Naive thymus-derived CD4-positive, alpha-beta T cell (primary cell): ENCODE measurements at regions of chr9 and their contacts with region 1.

Region 1: GRCh38 chr9:128127990-128128835 is 684 bp upstream of the PTGES2 start:
- DNase-seq: peak; percentile 81 to 96 (median 93)
- ATAC-seq: peak; percentile 89
- H3K4me3 ChIP-seq: peak overlapping the region; percentile 99
- H3K4me3 Mint-ChIP-seq: peak overlapping the region; percentile 93 to 99 (median 98)
- H3K27ac ChIP-seq: peak overlapping the region; percentile 98
- H3K27ac Mint-ChIP-seq: peak overlapping the region; percentile 97 to 100 (median 99)
- H3K4me1 ChIP-seq: peaks cover 16 to 20% of the 10 kb centered on the region in 2 donors
- H3K4me1 Mint-ChIP-seq: peaks cover 22 to 44% (median 35%) of the 10 kb centered on the region in 7 donors
- H3K27me3 ChIP-seq: no peaks in the 10 kb centered on the region
- H3K27me3 Mint-ChIP-seq: peaks cover 0 to 24% (median 3%) of the 10 kb centered on the region in 5 donors

Region 2: GRCh38 chr9:126985870-126986498 is 1142.2 kb before region 1 on chr9:
- CTCF ChIA-PET with region 1: no interaction called
- POLR2A ChIA-PET with region 1: no interaction called
- intact Hi-C with region 1: loop called in 1 of 2 experiments (anchors 5 kb)
- DNase-seq: peak; percentile 57 to 97 (median 95)
- ATAC-seq: peak; percentile 92
- H3K4me3 ChIP-seq: peak overlapping the region; percentile 5
- H3K4me3 Mint-ChIP-seq: peak overlapping the region; percentile 58 to 88 (median 76)
- H3K27ac ChIP-seq: no peak overlapping the region
- H3K27ac Mint-ChIP-seq: peak overlapping the region; percentile 44 to 91 (median 81)
- H3K4me1 ChIP-seq: peaks cover 43 to 72% of the 10 kb centered on the region in 2 donors
- H3K4me1 Mint-ChIP-seq: peaks cover 53 to 69% (median 63%) of the 10 kb centered on the region in 7 donors
- H3K27me3 ChIP-seq: peaks cover 0 to 4% of the 10 kb centered on the region in 2 donors
- H3K27me3 Mint-ChIP-seq: peaks cover 56 to 86% (median 70%) of the 10 kb centered on the region in 5 donors

Region 3: GRCh38 chr9:127614961-127615360 is 513.3 kb before region 1 on chr9:
- CTCF ChIA-PET with region 1: no interaction called
- POLR2A ChIA-PET with region 1: no interaction called
- intact Hi-C with region 1: no loop called
- DNase-seq: no peak
- ATAC-seq: no peak
- H3K4me3 ChIP-seq: no peak overlapping the region
- H3K4me3 Mint-ChIP-seq: no peak overlapping the region
- H3K27ac ChIP-seq: no peak overlapping the region
- H3K27ac Mint-ChIP-seq: no peak overlapping the region
- H3K4me1 ChIP-seq: peaks cover 6 to 9% of the 10 kb centered on the region in 2 donors
- H3K4me1 Mint-ChIP-seq: peaks cover 16 to 19% (median 17%) of the 10 kb centered on the region in 7 donors
- H3K27me3 ChIP-seq: no peaks in the 10 kb centered on the region
- H3K27me3 Mint-ChIP-seq: peaks cover 0 to 30% (median 11%) of the 10 kb centered on the region in 5 donors

Region 4: DNA sequence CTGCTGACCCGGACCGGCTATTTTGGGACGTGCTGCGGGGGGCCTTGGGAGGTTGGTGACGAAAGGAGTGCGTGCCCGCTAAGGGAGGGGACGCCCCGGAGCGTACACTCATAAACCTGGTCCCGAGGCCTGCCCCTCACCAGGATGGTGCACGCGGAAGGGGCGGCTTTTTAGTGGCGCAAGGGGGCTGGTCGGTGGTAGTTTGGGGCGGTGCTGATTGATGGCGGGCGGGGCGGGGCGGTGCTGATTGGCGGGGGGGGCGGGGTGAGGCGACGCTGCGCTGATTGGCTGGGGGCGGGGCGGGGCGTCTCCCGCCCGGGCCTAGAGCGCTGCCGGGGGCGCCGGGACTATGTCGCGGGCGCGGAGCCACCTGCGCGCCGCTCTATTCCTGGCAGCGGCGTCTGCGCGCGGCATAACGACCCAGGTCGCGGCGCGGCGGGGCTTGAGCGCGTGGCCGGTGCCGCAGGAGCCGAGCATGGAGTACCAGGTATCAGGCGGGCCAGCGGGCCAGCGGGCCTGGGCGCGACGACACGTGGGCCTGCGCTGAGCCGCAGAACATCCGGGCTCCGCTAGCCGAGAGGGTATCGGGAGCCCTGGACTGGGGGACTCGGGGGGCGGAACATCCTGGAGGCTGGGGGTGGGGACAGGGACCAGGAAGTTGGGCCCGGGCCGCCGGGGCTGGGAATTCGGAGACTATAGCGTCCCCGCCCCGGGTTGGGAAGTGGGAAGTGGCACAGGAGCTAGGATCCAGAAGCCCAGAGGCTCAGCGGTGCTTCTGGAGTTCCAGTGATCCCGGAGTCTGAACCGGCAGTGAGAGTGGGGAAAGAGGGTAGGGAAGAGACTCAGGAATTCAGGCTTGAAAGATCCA is 325.4 kb before region 1 on chr9 and contains the start of gene FPGS:
- CTCF ChIA-PET with region 1: no interaction called
- POLR2A ChIA-PET with region 1: no interaction called
- intact Hi-C with region 1: loop called in 1 of 2 experiments (anchors 1 kb)
- DNase-seq: peak; percentile 77 to 86 (median 85)
- ATAC-seq: peak; percentile 94
- H3K4me3 ChIP-seq: peak within 1 kb of the TSS; percentile 81
- H3K4me3 Mint-ChIP-seq: peak within 1 kb of the TSS; percentile 81 to 95 (median 90)
- H3K27ac ChIP-seq: peak within 1 kb of the TSS; percentile 93
- H3K27ac Mint-ChIP-seq: peak within 1 kb of the TSS; percentile 80 to 95 (median 89)
- H3K4me1 ChIP-seq: peaks cover 12 to 19% of the 10 kb centered on the region in 2 donors
- H3K4me1 Mint-ChIP-seq: peaks cover 4 to 31% (median 20%) of the 10 kb centered on the region in 7 donors
- H3K27me3 ChIP-seq: no peaks in the 10 kb centered on the region
- H3K27me3 Mint-ChIP-seq: no peaks in the 10 kb centered on the region
- total RNA-seq, gene FPGS: 90.4 to 123 (median 95.4) TPM

Region 5: GRCh38 chr9:128055344-128056040 is 72.7 kb before region 1 on chr9:
- CTCF ChIA-PET with region 1: no interaction called
- POLR2A ChIA-PET with region 1: no interaction called
- intact Hi-C with region 1: no loop called
- DNase-seq: no peak
- ATAC-seq: no peak
- H3K4me3 ChIP-seq: no peak overlapping the region
- H3K4me3 Mint-ChIP-seq: no peak overlapping the region
- H3K27ac ChIP-seq: no peak overlapping the region
- H3K27ac Mint-ChIP-seq: no peak overlapping the region
- H3K4me1 ChIP-seq: peaks cover 0 to 1% of the 10 kb centered on the region in 2 donors
- H3K4me1 Mint-ChIP-seq: peaks cover 0 to 8% (median 0%) of the 10 kb centered on the region in 7 donors
- H3K27me3 ChIP-seq: no peaks in the 10 kb centered on the region
- H3K27me3 Mint-ChIP-seq: peaks cover 0 to 7% (median 0%) of the 10 kb centered on the region in 5 donors

Region 6: GRCh38 chr9:128117613-128118471 is 10.4 kb before region 1 on chr9:
- CTCF ChIA-PET with region 1: interaction called, 13 read pairs
- POLR2A ChIA-PET with region 1: interaction called, 3 read pairs
- intact Hi-C with region 1: loop called (anchors 1 kb)
- DNase-seq: peak; percentile 82 to 99 (median 92)
- ATAC-seq: peak; percentile 97
- H3K4me3 ChIP-seq: no peak overlapping the region
- H3K4me3 Mint-ChIP-seq: peak overlapping the region in 4 of 10 donors; percentile 3 to 59 (median 36)
- H3K27ac ChIP-seq: no peak overlapping the region
- H3K27ac Mint-ChIP-seq: peak overlapping the region in 8 of 9 donors; percentile 11 to 88 (median 60)
- H3K4me1 ChIP-seq: peaks cover 0 to 7% of the 10 kb centered on the region in 2 donors
- H3K4me1 Mint-ChIP-seq: peaks cover 6 to 13% (median 7%) of the 10 kb centered on the region in 7 donors
- H3K27me3 ChIP-seq: no peaks in the 10 kb centered on the region
- H3K27me3 Mint-ChIP-seq: no peaks in the 10 kb centered on the region

Region 7: DNA sequence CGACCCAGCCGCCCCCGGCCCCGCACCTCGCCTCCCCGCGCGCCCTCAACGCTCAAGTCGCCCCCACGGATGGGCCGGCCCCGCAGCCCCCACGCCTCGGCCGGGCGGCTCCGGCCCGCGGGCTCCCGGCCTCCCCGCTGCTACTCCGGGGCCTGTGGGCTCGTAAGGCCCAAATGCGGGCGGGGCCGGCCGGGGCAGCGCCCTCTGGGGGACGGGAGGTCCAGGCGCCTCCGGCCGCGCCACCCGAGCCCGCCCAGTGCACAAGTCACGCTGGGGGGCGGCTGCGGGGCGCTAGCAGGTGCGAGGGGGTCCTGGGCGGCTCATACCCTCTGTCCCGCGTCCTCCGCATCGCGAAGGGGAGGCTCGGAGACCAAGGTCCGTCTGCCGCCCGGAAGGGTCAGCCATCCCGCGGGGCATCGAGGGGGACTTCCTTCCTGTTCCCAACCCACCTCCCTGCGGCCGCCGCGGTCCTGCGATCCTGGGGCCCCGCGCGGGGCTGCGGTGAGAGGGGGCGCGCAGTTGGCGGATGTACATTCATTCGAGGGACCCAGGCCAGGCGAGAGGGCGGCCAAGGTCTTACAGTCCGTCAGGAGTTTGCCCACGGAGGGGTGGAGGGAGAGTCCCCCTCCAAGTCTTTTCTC is 63.3 kb after region 1 on chr9 and contains the start of gene CIZ1:
- CTCF ChIA-PET with region 1: interaction called, 3 read pairs
- POLR2A ChIA-PET with region 1: interaction called, 3 read pairs
- intact Hi-C with region 1: loop called (anchors 1 to 2 kb)
- DNase-seq: peak; percentile 51 to 86 (median 69)
- ATAC-seq: peak; percentile 95
- H3K4me3 ChIP-seq: peak within 1 kb of the TSS; percentile 76
- H3K4me3 Mint-ChIP-seq: peak within 1 kb of the TSS; percentile 92 to 99 (median 96)
- H3K27ac ChIP-seq: peak within 1 kb of the TSS; percentile 89
- H3K27ac Mint-ChIP-seq: peak within 1 kb of the TSS; percentile 84 to 93 (median 90)
- H3K4me1 ChIP-seq: peaks cover 12 to 16% of the 10 kb centered on the region in 2 donors
- H3K4me1 Mint-ChIP-seq: peaks cover 13 to 39% (median 31%) of the 10 kb centered on the region in 7 donors
- H3K27me3 ChIP-seq: no peaks in the 10 kb centered on the region
- H3K27me3 Mint-ChIP-seq: peaks cover 0 to 13% (median 0%) of the 10 kb centered on the region in 5 donors
- total RNA-seq, gene CIZ1: 110 to 163 (median 142) TPM

Region 8: GRCh38 chr9:128275996-128276573 is 147.9 kb after region 1 on chr9 and contains the starts of genes GOLGA2 and SWI5:
- CTCF ChIA-PET with region 1: no interaction called
- POLR2A ChIA-PET with region 1: interaction called, 5 read pairs
- intact Hi-C with region 1: loop called in 1 of 2 experiments (anchors 1 kb)
- DNase-seq: peak; percentile 98 to 100 (median 100)
- ATAC-seq: peak; percentile 98
- H3K4me3 ChIP-seq: peak within 1 kb of the TSS; percentile 95
- H3K4me3 Mint-ChIP-seq: peak within 1 kb of the TSS; percentile 94 to 98 (median 96)
- H3K27ac ChIP-seq: peak within 1 kb of the TSS; percentile 90
- H3K27ac Mint-ChIP-seq: peak within 1 kb of the TSS; percentile 94 to 98 (median 97)
- H3K4me1 ChIP-seq: peaks cover 16 to 21% of the 10 kb centered on the region in 2 donors
- H3K4me1 Mint-ChIP-seq: peaks cover 24 to 51% (median 46%) of the 10 kb centered on the region in 7 donors
- H3K27me3 ChIP-seq: no peaks in the 10 kb centered on the region
- H3K27me3 Mint-ChIP-seq: peaks cover 0 to 7% (median 0%) of the 10 kb centered on the region in 5 donors
- total RNA-seq, gene GOLGA2: 56.5 to 76.6 (median 70.6) TPM
- total RNA-seq, gene SWI5: 8.7 to 17.4 (median 9.8) TPM